B cell (primary cell): ENCODE measurements at regions of chr2 and their contacts with region 1.

Region 1: DNA sequence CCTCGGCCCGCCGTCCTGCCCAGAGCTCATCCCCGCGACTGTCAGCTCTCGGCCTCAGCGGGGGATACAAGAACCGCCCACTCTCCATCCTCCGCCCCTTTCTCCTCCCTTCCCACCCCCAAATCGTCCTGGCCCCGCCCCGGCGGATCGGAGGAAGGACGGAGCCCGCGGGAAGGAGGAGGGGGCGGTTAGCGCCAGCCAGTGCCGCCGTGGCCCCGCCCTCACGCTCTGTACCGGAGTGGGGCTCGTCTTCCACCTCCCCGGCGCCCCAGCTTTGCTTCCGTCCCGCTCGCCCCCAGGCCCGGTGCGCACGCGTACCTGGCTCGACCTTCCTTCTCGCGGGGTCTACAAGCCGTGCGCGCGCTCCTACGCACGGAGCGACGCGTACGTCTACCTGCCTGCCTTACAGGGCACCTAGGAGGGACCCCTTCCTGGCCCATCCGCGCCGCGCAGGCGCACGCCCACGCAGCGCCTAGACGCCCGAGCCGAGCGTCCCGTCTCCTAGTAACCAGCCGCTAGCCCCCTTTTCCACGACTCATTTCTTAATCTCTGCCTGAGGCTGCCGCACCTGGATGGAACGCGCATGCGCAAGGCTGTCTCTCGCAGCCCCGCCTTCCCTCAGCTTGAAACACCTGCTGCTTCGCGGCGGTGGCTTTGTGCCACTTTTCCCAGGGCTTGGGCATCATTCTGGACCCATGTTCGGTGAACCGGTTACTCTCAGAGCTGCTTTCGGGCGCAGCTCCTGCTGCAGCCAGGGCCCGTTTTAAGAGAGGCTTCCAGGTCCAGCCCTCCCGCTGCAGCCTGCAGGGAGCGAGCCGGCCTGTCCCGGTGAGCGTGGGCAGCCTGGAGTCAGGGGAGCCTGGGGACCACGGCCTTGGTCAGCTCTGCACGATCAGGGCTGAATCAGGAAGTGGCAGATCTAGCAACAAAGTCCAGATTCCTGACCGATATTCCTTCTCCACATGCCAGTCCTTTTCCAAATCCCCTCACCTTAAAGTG is at the start of gene C2orf15:
- DNase-seq: peak; percentile 98
- ATAC-seq: peak; percentile 90
- H3K4me3 ChIP-seq: peak within 1 kb of the TSS; percentile 76 to 90 (median 87)
- H3K4me3 Mint-ChIP-seq: peak within 1 kb of the TSS; percentile 97
- H3K27ac ChIP-seq: peak within 1 kb of the TSS; percentile 93
- H3K27ac Mint-ChIP-seq: peak within 1 kb of the TSS; percentile 97
- H3K4me1 ChIP-seq: peaks cover 12 to 13% of the 10 kb centered on the region in 2 donors
- H3K4me1 Mint-ChIP-seq: peaks cover 25% of the 10 kb centered on the region
- H3K27me3 ChIP-seq: no peaks in the 10 kb centered on the region
- H3K27me3 Mint-ChIP-seq: no peaks in the 10 kb centered on the region
- CTCF ChIP-seq: no peak
- total RNA-seq, gene C2orf15: 1.0 and 1.2 TPM in 2 replicates

Region 2: DNA sequence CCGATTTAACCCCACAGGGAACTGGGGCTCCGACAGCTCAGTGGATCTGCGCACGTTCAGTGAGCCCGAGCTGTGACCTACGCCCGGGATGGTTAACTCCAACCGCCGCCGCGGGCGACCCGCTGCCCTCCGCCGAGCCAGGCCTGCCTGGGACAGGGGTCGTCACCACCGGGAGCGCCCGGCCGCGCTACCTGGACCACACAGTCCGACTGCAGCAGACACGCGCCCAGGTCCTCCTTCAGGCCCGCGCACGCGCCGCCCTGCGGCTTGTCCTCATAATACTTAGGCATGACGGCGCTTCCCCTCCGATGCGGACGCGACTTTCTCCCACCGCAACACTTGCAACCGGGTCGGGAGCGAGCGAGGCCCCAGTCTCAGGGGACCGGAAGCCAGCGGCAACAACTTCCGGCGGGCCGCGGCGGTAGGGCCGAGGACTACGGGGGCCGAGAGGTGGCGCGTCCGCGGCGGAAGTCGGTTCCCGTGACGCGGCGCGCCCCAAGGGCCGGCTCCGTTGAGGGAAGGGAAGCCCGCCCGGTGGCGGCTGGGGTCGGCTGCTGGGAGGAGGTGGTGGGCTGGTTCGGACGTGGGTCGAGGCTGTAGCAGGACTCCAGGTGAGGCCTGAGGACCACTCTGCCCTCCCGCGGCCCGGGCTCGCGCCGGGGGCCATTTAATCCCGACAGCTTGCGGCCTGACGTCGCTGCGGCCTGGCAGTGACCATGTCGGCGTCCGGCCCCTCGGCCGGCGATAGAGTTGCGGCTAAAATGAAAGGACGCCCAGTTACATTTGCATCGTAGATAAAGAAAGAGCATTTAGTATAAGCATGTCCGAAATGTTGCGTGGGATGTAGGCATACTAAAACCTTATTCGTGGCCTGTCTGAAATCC is 533.1 kb before region 1 on chr2 and contains the starts of genes COA5 and UNC50:
- CTCF ChIA-PET with region 1: no interaction called
- POLR2A ChIA-PET with region 1: no interaction called
- intact Hi-C with region 1: loop called (anchors 1 kb)
- DNase-seq: peak; percentile 94
- ATAC-seq: peak; percentile 92
- H3K4me3 ChIP-seq: peak within 1 kb of the TSS; percentile 88 to 99 (median 97)
- H3K4me3 Mint-ChIP-seq: peak within 1 kb of the TSS; percentile 93
- H3K27ac ChIP-seq: peak within 1 kb of the TSS; percentile 86 to 97
- H3K27ac Mint-ChIP-seq: peak within 1 kb of the TSS; percentile 94
- H3K4me1 ChIP-seq: peaks cover 33 to 35% of the 10 kb centered on the region in 2 donors
- H3K4me1 Mint-ChIP-seq: peaks cover 67% of the 10 kb centered on the region
- H3K27me3 ChIP-seq: no peaks in the 10 kb centered on the region
- H3K27me3 Mint-ChIP-seq: no peaks in the 10 kb centered on the region
- CTCF ChIP-seq: no peak
- total RNA-seq, gene COA5: 46.9 and 48.9 TPM in 2 replicates
- total RNA-seq, gene UNC50: 38.8 and 45.5 TPM in 2 replicates

Region 3: DNA sequence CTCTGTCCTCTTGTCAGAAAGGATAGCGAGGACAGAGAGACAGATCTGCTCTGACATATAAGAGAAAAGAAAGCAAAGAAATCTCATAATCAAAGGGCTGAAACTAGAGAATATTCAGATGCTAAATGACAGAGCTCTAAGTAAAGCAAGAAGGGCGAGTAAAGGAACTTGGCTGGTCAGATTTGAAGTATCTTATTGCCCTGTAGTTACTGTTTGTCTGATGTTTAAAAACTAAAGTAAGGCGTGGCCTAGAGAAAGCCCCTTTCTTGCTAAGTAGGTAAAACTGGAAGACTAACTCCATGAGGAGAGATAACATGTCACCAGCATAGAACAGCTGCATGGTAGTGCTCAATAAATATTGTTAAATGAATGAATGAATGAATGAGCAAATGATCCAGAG is 275.4 kb before region 1 on chr2:
- CTCF ChIA-PET with region 1: no interaction called
- POLR2A ChIA-PET with region 1: no interaction called
- intact Hi-C with region 1: no loop called
- DNase-seq: no peak
- ATAC-seq: no peak
- H3K4me3 ChIP-seq: no peak overlapping the region
- H3K4me3 Mint-ChIP-seq: no peak overlapping the region
- H3K27ac ChIP-seq: no peak overlapping the region
- H3K27ac Mint-ChIP-seq: no peak overlapping the region
- H3K4me1 ChIP-seq: no peaks in the 10 kb centered on the region
- H3K4me1 Mint-ChIP-seq: no peaks in the 10 kb centered on the region
- H3K27me3 ChIP-seq: peaks cover 0 to 2% (median 0%) of the 10 kb centered on the region in 4 experiments
- H3K27me3 Mint-ChIP-seq: peaks cover 10% of the 10 kb centered on the region
- CTCF ChIP-seq: no peak

Region 4: GRCh38 chr2:99096728-99097127 is 44.7 kb before region 1 on chr2:
- CTCF ChIA-PET with region 1: no interaction called
- POLR2A ChIA-PET with region 1: no interaction called
- intact Hi-C with region 1: no loop called
- DNase-seq: no peak
- ATAC-seq: no peak
- H3K4me3 ChIP-seq: no peak overlapping the region
- H3K4me3 Mint-ChIP-seq: no peak overlapping the region
- H3K27ac ChIP-seq: no peak overlapping the region
- H3K27ac Mint-ChIP-seq: no peak overlapping the region
- H3K4me1 ChIP-seq: no peaks in the 10 kb centered on the region
- H3K4me1 Mint-ChIP-seq: no peaks in the 10 kb centered on the region
- H3K27me3 ChIP-seq: no peaks in the 10 kb centered on the region
- H3K27me3 Mint-ChIP-seq: no peaks in the 10 kb centered on the region
- CTCF ChIP-seq: no peak

Region 5: DNA sequence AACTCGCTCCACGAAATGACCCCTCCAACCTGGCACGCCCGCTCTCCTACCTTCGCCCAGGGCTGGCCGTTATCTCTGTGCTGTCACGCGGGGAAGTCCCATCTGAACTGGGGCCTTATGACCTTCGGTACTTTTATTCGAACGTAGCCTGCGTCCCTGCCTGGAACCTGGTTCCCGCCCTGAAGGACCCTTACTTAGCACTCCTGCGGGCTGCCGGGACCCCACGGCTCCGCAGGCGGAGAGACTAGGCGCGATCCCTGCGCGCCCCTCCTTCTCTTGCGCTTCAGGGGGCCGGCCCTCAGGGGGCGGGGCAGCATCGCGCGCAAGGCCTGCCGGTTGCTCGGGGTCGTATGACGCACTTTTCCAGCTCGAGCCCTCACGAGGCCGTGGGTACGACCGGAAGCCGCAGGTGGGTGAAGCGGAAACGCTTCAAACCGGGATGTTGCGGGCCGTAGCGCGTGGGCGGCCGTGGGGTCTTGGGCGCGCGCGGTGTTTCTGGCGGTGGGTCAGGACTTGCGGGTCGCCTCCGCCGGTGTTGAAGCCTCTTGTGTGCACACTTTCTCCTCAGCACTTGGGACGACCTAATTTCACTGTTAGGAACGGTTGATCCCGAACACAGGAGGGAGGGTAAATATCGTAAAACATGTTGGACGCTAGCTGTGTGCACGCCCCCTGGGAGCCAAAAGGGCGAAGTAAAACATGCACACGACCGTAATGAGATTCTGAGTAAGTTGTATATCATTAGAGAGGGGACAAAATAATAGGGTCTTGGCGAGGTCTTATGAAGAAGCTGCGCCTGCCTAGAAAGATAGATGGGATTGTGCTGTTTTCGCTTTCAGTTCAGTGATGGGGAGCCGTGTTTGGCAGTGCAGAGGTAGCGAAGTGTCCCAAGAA is 13.5 kb after region 1 on chr2 and contains the starts of genes LIPT1 and TSGA10:
- CTCF ChIA-PET with region 1: interaction called, 24 read pairs
- POLR2A ChIA-PET with region 1: interaction called, 31 read pairs
- intact Hi-C with region 1: loop called (anchors 1 kb)
- DNase-seq: peak; percentile 97
- ATAC-seq: peak; percentile 90
- H3K4me3 ChIP-seq: peak within 1 kb of the TSS; percentile 86 to 98 (median 94)
- H3K4me3 Mint-ChIP-seq: no peak within 1 kb of the TSS
- H3K27ac ChIP-seq: peak within 1 kb of the TSS; percentile 91 to 99
- H3K27ac Mint-ChIP-seq: peak within 1 kb of the TSS; percentile 91
- H3K4me1 ChIP-seq: peaks cover 27 to 29% of the 10 kb centered on the region in 2 donors
- H3K4me1 Mint-ChIP-seq: peaks cover 47% of the 10 kb centered on the region
- H3K27me3 ChIP-seq: no peaks in the 10 kb centered on the region
- H3K27me3 Mint-ChIP-seq: no peaks in the 10 kb centered on the region
- CTCF ChIP-seq: no peak
- total RNA-seq, gene LIPT1: 24.3 and 26.2 TPM in 2 replicates
- total RNA-seq, gene TSGA10: 36.9 and 39.6 TPM in 2 replicates

Region 6: GRCh38 chr2:99180755-99181623 is 39.6 kb after region 1 on chr2 and contains the starts of genes MITD1 and MRPL30:
- CTCF ChIA-PET with region 1: interaction called, 6 read pairs
- POLR2A ChIA-PET with region 1: interaction called, 6 read pairs
- intact Hi-C with region 1: loop called (anchors 1 kb)
- DNase-seq: peak; percentile 96
- ATAC-seq: peak; percentile 96
- H3K4me3 ChIP-seq: peak within 1 kb of the TSS; percentile 93 to 100 (median 97)
- H3K4me3 Mint-ChIP-seq: peak within 1 kb of the TSS; percentile 99
- H3K27ac ChIP-seq: peak within 1 kb of the TSS; percentile 92 to 95
- H3K27ac Mint-ChIP-seq: peak within 1 kb of the TSS; percentile 99
- H3K4me1 ChIP-seq: peaks cover 25 to 26% of the 10 kb centered on the region in 2 donors
- H3K4me1 Mint-ChIP-seq: peaks cover 49% of the 10 kb centered on the region
- H3K27me3 ChIP-seq: no peaks in the 10 kb centered on the region
- H3K27me3 Mint-ChIP-seq: no peaks in the 10 kb centered on the region
- CTCF ChIP-seq: no peak
- total RNA-seq, gene MITD1: 71.6 and 73.0 TPM in 2 replicates
- total RNA-seq, gene MRPL30: 18.5 and 21.9 TPM in 2 replicates

Region 7: GRCh38 chr2:99489761-99490622 is 348.6 kb after region 1 on chr2 and contains the start of gene REV1:
- CTCF ChIA-PET with region 1: interaction called, 4 read pairs
- POLR2A ChIA-PET with region 1: no interaction called
- intact Hi-C with region 1: loop called (anchors 1 kb)
- DNase-seq: peak; percentile 99
- ATAC-seq: peak; percentile 85
- H3K4me3 ChIP-seq: peak within 1 kb of the TSS; percentile 58 to 81 (median 80)
- H3K4me3 Mint-ChIP-seq: peak within 1 kb of the TSS; percentile 99
- H3K27ac ChIP-seq: peak within 1 kb of the TSS; percentile 79 to 80
- H3K27ac Mint-ChIP-seq: peak within 1 kb of the TSS; percentile 99
- H3K4me1 ChIP-seq: peaks cover 10 to 27% of the 10 kb centered on the region in 2 donors
- H3K4me1 Mint-ChIP-seq: peaks cover 29% of the 10 kb centered on the region
- H3K27me3 ChIP-seq: no peaks in the 10 kb centered on the region
- H3K27me3 Mint-ChIP-seq: peaks cover 12% of the 10 kb centered on the region
- CTCF ChIP-seq: peak; percentile 83
- total RNA-seq, gene REV1: 69.5 and 70.5 TPM in 2 replicates